ENCODE measurements at regions of chr12 and their contacts with region 1.

Region 1: GRCh38 chr12:56448860-56449621 is at the start of gene TIMELESS:
- DNase-seq: peak; percentile 88 to 95 (median 94)
- ATAC-seq: peak; percentile 98
- H3K4me3 ChIP-seq: peak within 1 kb of the TSS; percentile 51
- H3K27ac ChIP-seq: peak within 1 kb of the TSS; percentile 85
- H3K4me1 ChIP-seq: no peaks in the 10 kb centered on the region
- H3K27me3 ChIP-seq: no peaks in the 10 kb centered on the region
- total RNA-seq, gene TIMELESS: 2.2 to 3.9 (median 3.6) TPM

Region 2: DNA sequence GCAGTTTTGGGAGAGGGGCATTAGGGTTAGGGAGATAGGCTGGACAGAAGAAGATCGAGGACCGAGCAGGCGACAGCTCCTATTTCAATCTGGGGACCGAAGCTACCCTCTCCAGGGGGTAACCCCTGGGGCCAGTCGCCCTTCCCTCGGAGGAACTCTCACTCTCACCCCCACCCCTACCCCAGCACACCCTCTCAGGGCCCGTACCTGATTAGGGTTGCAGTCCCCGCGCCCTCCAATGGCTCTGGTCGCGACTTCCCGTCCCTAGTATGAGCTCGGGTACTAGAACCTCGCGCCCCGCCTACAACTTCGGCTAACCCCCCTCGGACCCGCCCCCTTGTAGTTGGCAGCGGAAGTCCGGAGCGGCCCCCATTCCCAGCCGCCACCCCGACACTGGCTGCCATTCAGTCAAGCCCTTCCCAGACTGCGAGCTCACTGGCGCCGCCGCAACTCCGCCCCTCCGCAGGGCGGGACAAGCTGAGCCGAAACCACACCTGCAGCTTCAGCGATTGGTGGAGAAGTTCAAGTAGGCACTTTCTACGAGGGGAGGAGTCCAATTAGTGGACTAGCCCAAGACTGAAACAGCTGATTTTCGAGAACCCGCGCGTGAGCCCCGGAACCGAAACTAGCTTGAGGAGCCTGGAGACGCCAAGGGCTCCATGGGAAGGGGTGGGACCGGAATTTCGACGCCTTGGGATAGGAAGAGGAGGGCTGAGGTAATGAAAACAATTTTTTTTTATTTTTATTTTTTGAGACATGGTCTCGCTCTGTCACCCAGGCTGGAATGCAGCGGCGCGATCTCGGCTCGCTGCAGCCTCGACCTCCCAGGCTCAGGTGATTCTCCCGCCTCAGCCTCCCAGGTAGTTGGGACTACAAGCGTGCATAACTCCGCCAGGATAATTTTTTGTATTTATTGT is 88.9 kb before region 1 on chr12 and contains the start of gene STAT2:
- intact Hi-C with region 1: loop called in 2 of 4 experiments (anchors 10 kb)
- DNase-seq: peak; percentile 100
- ATAC-seq: peak; percentile 99
- H3K4me3 ChIP-seq: peak within 1 kb of the TSS; percentile 72
- H3K27ac ChIP-seq: peak within 1 kb of the TSS; percentile 84
- H3K4me1 ChIP-seq: peaks cover 2% of the 10 kb centered on the region
- H3K27me3 ChIP-seq: no peaks in the 10 kb centered on the region
- total RNA-seq, gene STAT2: 44.6 to 67.6 (median 53.5) TPM